ENCODE measurements at regions of chr15 and their contacts with region 1.

Region 1: GRCh38 chr15:78241007-78241406 is 6.6 kb upstream of the ACSBG1 start:
- H3K4me3 ChIP-seq: no peak overlapping the region
- H3K27ac ChIP-seq: no peak overlapping the region
- H3K4me1 ChIP-seq: no peaks in the 10 kb centered on the region
- CTCF ChIP-seq: peak; percentile 86

Region 2: GRCh38 chr15:77966540-77967290 is 274.3 kb before region 1 on chr15:
- CTCF ChIA-PET with region 1: interaction called, 35 read pairs
- POLR2A ChIA-PET with region 1: no interaction called
- H3K4me3 ChIP-seq: no peak overlapping the region
- H3K27ac ChIP-seq: no peak overlapping the region
- H3K4me1 ChIP-seq: no peaks in the 10 kb centered on the region
- CTCF ChIP-seq: no peak

Region 3: DNA sequence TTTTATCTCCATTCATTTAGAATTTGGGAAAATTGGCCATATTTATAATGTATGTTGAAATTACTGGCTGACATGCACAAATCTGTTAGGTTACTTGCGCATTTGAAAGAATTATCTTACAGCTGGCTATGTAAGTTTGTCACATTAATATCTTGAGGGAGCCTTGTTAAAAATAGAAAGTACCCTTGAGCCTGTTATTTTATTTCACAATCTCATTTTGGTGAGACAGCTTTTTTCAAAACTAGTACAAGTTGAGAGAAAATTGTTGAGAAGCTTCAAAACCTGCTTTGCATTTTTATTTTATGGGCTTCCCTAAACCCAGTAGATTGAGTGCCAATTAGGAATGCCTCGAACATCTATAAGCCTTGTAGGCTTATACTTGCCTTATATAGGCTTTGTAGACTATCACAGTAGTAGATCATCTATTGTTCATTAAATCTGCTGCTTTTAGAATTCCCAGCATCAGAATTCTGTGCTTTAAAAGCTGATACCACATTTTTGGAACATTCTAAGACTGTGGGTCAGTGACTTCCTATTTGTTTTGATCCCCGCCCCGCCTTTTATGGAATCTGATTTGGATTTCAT is 85.6 kb before region 1 on chr15:
- CTCF ChIA-PET with region 1: interaction called, 12 read pairs
- POLR2A ChIA-PET with region 1: no interaction called
- H3K4me3 ChIP-seq: no peak overlapping the region
- H3K27ac ChIP-seq: no peak overlapping the region
- H3K4me1 ChIP-seq: peaks cover 23% of the 10 kb centered on the region
- CTCF ChIP-seq: no peak

Region 4: GRCh38 chr15:78195735-78196201 is 45.2 kb before region 1 on chr15:
- CTCF ChIA-PET with region 1: interaction called, 81 read pairs
- POLR2A ChIA-PET with region 1: no interaction called
- H3K4me3 ChIP-seq: no peak overlapping the region
- H3K27ac ChIP-seq: no peak overlapping the region
- H3K4me1 ChIP-seq: no peaks in the 10 kb centered on the region
- CTCF ChIP-seq: peak; percentile 83

Region 5: DNA sequence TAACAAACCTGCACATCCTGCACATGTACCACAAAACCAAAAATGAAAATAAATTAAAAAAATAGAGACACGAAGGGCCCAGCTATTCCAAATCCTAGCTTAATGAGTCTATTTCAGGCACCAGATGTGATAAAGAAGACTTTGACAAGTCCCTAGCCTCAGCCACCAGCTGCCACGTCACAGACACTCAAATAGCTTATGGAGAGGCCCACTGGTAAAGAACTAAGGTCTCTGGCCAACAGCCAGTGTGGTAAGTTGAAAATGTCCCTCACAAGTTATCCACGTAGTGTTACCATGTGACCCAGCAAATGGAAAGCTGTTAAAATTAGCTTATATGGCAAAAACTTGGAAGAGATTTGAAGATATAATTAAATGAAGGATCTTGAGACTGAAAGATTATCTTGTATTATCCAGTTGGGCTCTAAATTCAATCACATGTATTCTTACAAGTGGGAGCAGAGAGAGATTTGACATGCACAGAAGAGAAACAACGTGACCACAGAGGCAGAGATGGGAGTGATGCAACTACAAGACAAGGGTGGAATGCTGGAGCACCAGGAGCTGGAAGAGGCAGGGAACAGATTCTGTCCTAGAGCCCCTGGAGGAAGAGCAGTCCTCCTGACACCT is 17.5 kb before region 1 on chr15:
- CTCF ChIA-PET with region 1: interaction called, 18 read pairs
- POLR2A ChIA-PET with region 1: no interaction called
- H3K4me3 ChIP-seq: no peak overlapping the region
- H3K27ac ChIP-seq: no peak overlapping the region
- H3K4me1 ChIP-seq: no peaks in the 10 kb centered on the region
- CTCF ChIP-seq: no peak